SK-N-SH (cell line): ENCODE measurements at regions of chr7 and their contacts with region 1.

Region 1: GRCh38 chr7:137626469-137627067 is 220.2 kb downstream of the DGKI start:
- DNase-seq: peak; percentile 41
- H3K4me3 ChIP-seq: no peak overlapping the region; a peak in 1 of 4 replicates
- H3K27ac ChIP-seq: peak overlapping the region in 1 of 2 experiments; percentile 96; a peak in 2 of 4 replicates
- H3K4me1 ChIP-seq: peaks cover 0 to 24% of the 10 kb centered on the region in 2 experiments; a peak in 2 of 4 replicates
- H3K27me3 ChIP-seq: no peaks in the 10 kb centered on the region
- CTCF ChIP-seq: peak; percentile 77
- EP300 ChIP-seq: no peak
- RAD21 ChIP-seq: peak; percentile 67

Region 2: GRCh38 chr7:137501562-137501961 is 125.0 kb before region 1 on chr7:
- CTCF ChIA-PET with region 1: no interaction called
- POLR2A ChIA-PET with region 1: no interaction called
- DNase-seq: no peak
- H3K4me3 ChIP-seq: no peak overlapping the region
- H3K27ac ChIP-seq: no peak overlapping the region
- H3K4me1 ChIP-seq: no peaks in the 10 kb centered on the region
- H3K27me3 ChIP-seq: no peaks in the 10 kb centered on the region
- CTCF ChIP-seq: no peak
- EP300 ChIP-seq: no peak
- RAD21 ChIP-seq: no peak

Region 3: DNA sequence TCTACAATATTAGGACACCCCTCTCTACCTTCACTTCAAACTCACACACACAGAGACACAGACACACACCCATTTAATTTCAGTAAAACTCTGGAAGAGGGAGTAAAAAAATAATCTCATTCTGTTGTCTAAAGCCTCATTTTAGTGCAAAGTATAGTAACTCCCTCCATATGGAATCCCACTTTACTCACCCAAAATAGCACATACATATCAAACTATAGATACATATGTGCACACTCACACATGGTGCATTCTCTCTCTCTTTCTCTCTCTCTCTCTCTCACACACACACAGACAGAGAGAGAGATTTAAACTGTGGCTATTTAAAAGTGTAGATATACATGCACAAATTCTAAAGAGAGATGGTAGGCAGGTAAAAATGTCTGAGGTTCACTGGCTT is 103.4 kb before region 1 on chr7:
- CTCF ChIA-PET with region 1: no interaction called
- POLR2A ChIA-PET with region 1: no interaction called
- DNase-seq: no peak
- H3K4me3 ChIP-seq: no peak overlapping the region
- H3K27ac ChIP-seq: no peak overlapping the region
- H3K4me1 ChIP-seq: peaks cover 0 to 22% of the 10 kb centered on the region in 2 experiments; a peak in 2 of 4 replicates
- H3K27me3 ChIP-seq: no peaks in the 10 kb centered on the region
- CTCF ChIP-seq: no peak
- EP300 ChIP-seq: no peak
- RAD21 ChIP-seq: no peak

Region 4: DNA sequence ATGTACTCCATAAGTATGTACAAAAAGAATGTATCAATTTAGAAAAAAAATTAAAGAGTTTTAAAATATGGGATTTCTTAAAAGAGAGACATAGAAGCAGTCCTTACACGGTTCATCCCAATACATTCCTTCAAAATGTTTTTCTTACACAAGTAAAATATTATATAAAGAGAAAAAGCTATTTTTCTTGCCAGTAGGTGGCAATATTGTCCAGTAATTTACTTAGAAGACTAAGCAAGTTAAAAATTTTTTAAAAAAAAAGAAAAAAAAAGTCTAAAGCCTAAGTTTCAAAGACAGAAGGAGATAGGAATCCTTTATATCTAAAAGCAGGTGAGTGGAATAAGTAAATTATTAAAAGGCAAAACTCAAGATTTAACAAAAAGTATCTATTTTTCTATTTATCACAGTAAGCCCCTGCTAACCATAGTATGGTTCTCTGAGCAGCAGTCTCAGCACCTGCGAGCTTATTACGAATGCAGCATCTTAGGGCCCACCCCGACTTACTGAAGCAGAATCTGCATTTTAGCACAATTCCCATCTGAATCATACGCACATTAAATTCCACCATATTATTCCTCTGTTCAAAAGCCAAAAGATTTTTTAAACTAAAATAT is 20.4 kb before region 1 on chr7:
- CTCF ChIA-PET with region 1: interaction called, 21 read pairs
- POLR2A ChIA-PET with region 1: no interaction called
- DNase-seq: no peak
- H3K4me3 ChIP-seq: no peak overlapping the region; a peak in 1 of 4 replicates
- H3K27ac ChIP-seq: no peak overlapping the region
- H3K4me1 ChIP-seq: no peaks in the 10 kb centered on the region; a peak in 1 of 4 replicates
- H3K27me3 ChIP-seq: no peaks in the 10 kb centered on the region
- CTCF ChIP-seq: peak; percentile 91
- EP300 ChIP-seq: no peak
- RAD21 ChIP-seq: peak; percentile 64

Region 5: GRCh38 chr7:137613006-137613405 is 13.6 kb before region 1 on chr7:
- CTCF ChIA-PET with region 1: interaction called, 17 read pairs
- POLR2A ChIA-PET with region 1: no interaction called
- DNase-seq: no peak
- H3K4me3 ChIP-seq: no peak overlapping the region
- H3K27ac ChIP-seq: no peak overlapping the region
- H3K4me1 ChIP-seq: peaks cover 0 to 3% of the 10 kb centered on the region in 2 experiments; a peak in 2 of 4 replicates
- H3K27me3 ChIP-seq: no peaks in the 10 kb centered on the region
- CTCF ChIP-seq: no peak
- EP300 ChIP-seq: no peak
- RAD21 ChIP-seq: no peak